Gastrocnemius medialis (tissue), 4 donors: ENCODE measurements at regions of chr3 and their contacts with region 1.

Region 1: GRCh38 chr3:14402304-14402811 is at the start of gene SLC6A6:
- DNase-seq: peak; percentile 93 to 97
- ATAC-seq: peak; percentile 75 to 80
- H3K4me3 ChIP-seq: peak within 1 kb of the TSS; percentile 62 to 94 (median 82)
- H3K27ac ChIP-seq: peak within 1 kb of the TSS; percentile 96 to 97 (median 96)
- H3K4me1 ChIP-seq: peaks cover 39 to 40% of the 10 kb centered on the region in 2 donors
- H3K27me3 ChIP-seq: no peaks in the 10 kb centered on the region
- CTCF ChIP-seq: peak; percentile 55 to 68 (median 59)
- POLR2A ChIP-seq: peak; percentile 84 to 94
- total RNA-seq, gene SLC6A6: 42.1 to 119 (median 88.7) TPM

Region 2: GRCh38 chr3:13740795-13741194 is 661.6 kb before region 1 on chr3:
- in situ Hi-C with region 1: no loop called
- intact Hi-C with region 1: no loop called
- DNase-seq: no peak
- ATAC-seq: no peak
- H3K4me3 ChIP-seq: no peak overlapping the region
- H3K27ac ChIP-seq: no peak overlapping the region
- H3K4me1 ChIP-seq: no peaks in the 10 kb centered on the region
- H3K27me3 ChIP-seq: peaks cover 0 to 3% (median 0%) of the 10 kb centered on the region in 3 donors
- CTCF ChIP-seq: no peak
- POLR2A ChIP-seq: no peak

Region 3: GRCh38 chr3:14301558-14301957 is 100.8 kb before region 1 on chr3:
- in situ Hi-C with region 1: no loop called
- intact Hi-C with region 1: loop called (anchors 1 kb)
- DNase-seq: peak; percentile 91 to 98
- ATAC-seq: peak; percentile 73 to 80
- H3K4me3 ChIP-seq: no peak overlapping the region
- H3K27ac ChIP-seq: peak overlapping the region; percentile 80 to 87 (median 83)
- H3K4me1 ChIP-seq: peaks cover 41 to 50% of the 10 kb centered on the region in 2 donors
- H3K27me3 ChIP-seq: no peaks in the 10 kb centered on the region
- CTCF ChIP-seq: no peak
- POLR2A ChIP-seq: peak; percentile 62 to 66

Region 4: DNA sequence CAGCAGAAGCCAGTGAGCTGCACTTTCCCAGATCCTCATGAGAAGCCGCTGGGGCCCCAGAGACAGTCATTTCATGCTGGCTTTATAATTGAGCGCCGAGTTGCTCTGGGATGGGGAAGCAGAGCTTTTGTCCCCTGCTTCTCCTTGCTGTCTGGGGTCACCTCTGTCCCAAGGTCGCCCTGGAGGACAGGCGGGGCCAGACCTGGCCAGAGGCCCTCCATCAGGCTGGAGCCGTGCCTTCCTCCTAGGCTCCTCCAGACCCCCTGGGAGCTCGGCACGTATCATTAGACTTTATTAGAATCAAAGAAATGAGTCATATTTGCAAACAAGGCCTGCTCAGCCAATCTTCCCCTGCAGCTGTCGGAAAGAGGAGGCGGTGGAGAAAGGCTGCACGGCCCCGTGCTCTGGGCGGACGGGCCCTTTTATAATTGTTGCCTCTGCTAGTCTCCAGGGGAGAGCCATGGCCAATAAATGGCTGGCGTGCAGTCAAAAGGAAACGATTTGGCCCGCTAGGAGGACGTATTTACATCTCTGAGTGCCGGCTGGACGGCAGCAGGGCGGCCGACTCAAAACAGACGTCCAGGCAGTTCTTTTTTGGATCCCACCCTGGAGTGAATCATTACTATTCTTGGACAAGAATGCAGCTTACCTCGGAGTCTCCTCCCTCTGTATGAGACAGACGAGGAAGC is 50.5 kb after region 1 on chr3:
- in situ Hi-C with region 1: no loop called
- intact Hi-C with region 1: loop called (anchors 2 kb)
- DNase-seq: peak; percentile 77 to 92
- ATAC-seq: peak; percentile 67 to 71
- H3K4me3 ChIP-seq: peak overlapping the region in 1 of 4 donors; percentile 19
- H3K27ac ChIP-seq: peak overlapping the region; percentile 83 to 93 (median 88)
- H3K4me1 ChIP-seq: peaks cover 45% of the 10 kb centered on the region in 2 donors
- H3K27me3 ChIP-seq: no peaks in the 10 kb centered on the region
- CTCF ChIP-seq: peak in 2 of 5 experiments; percentile 7 to 24
- POLR2A ChIP-seq: peak; percentile 15 to 24

Region 5: DNA sequence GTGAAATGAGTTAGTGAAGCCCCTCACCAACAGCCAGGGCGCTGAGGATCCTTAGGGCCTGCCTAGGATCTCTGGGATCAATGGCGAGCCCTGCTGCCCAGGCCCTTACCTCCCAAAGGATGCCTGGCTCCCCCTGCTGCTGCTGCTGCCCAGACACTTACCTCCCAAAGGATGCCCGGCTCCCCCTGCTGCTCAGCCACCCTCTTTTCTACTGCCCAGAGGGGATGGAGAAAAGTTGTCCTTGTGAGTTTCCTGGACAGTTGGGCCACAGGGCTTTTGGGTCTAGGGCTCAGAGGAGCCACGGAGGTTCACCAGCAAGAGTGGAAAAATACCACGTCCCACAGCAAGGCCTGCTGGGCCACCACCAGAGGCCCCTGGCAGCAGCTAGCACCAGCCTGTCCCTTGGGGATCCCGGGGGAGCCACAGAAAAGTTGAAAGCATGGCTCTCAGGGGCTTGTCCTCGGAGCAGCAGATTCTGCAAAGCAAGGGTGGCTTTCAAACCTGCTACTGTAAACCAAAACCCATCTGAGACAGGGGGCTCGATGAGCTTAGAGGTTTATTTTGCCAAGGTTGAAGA is 59.5 kb after region 1 on chr3:
- in situ Hi-C with region 1: loop called in 2 of 4 experiments (anchors 10 kb)
- intact Hi-C with region 1: no loop called
- DNase-seq: no peak
- ATAC-seq: no peak
- H3K4me3 ChIP-seq: no peak overlapping the region
- H3K27ac ChIP-seq: no peak overlapping the region
- H3K4me1 ChIP-seq: peaks cover 11% of the 10 kb centered on the region in 2 donors
- H3K27me3 ChIP-seq: no peaks in the 10 kb centered on the region
- CTCF ChIP-seq: peak in 3 of 5 experiments; percentile 35 to 39 (median 39)
- POLR2A ChIP-seq: no peak